ENCODE measurements at regions of chr5 and their contacts with region 1.

Region 1: DNA sequence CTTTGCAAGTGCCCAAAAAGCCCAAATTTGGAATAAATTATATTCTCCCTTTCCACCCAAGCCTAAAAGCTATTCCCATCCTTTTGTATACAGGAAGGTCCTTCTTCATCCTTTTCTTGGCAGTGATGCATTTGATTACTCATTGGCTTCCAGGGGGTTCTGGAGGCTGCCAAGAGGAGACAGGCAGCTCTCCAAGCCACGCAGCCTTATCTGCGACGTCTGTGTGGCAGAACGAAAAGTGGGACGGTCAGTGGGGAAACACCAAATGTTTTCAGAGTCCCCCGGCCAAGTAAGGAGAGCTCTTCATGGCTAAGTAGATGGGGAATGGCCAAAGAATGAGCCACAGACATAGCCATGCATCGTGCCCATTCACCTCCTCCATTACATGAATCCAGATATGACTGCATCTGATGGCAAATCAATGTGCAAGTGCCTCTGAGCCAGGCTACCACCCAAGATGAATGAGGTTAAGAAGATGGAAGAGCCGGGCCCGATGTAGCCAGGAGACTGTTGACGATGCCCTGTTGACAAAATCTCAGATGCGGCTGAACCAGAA is 12.1 kb downstream of the ADAM19 start:
- DNase-seq: peak; percentile 79
- H3K4me3 Mint-ChIP-seq: no peak overlapping the region
- H3K27ac Mint-ChIP-seq: no peak overlapping the region
- H3K4me1 Mint-ChIP-seq: peaks cover 13% of the 10 kb centered on the region
- H3K27me3 Mint-ChIP-seq: no peaks in the 10 kb centered on the region
- CTCF ChIP-seq: no peak

Region 2: GRCh38 chr5:157611571-157612476 is 48.4 kb after region 1 on chr5:
- CTCF ChIA-PET with region 1: no interaction called
- POLR2A ChIA-PET with region 1: interaction called, 3 read pairs
- intact Hi-C with region 1: loop called (anchors 5 kb)
- DNase-seq: peak; percentile 90
- H3K4me3 Mint-ChIP-seq: no peak overlapping the region
- H3K27ac Mint-ChIP-seq: peak overlapping the region; percentile 47
- H3K4me1 Mint-ChIP-seq: peaks cover 21% of the 10 kb centered on the region
- H3K27me3 Mint-ChIP-seq: no peaks in the 10 kb centered on the region
- CTCF ChIP-seq: no peak

Region 3: GRCh38 chr5:157681048-157681447 is 117.6 kb after region 1 on chr5:
- CTCF ChIA-PET with region 1: no interaction called
- POLR2A ChIA-PET with region 1: no interaction called
- intact Hi-C with region 1: no loop called
- DNase-seq: no peak
- H3K4me3 Mint-ChIP-seq: no peak overlapping the region
- H3K27ac Mint-ChIP-seq: no peak overlapping the region
- H3K4me1 Mint-ChIP-seq: no peaks in the 10 kb centered on the region
- H3K27me3 Mint-ChIP-seq: no peaks in the 10 kb centered on the region
- CTCF ChIP-seq: no peak

Region 4: DNA sequence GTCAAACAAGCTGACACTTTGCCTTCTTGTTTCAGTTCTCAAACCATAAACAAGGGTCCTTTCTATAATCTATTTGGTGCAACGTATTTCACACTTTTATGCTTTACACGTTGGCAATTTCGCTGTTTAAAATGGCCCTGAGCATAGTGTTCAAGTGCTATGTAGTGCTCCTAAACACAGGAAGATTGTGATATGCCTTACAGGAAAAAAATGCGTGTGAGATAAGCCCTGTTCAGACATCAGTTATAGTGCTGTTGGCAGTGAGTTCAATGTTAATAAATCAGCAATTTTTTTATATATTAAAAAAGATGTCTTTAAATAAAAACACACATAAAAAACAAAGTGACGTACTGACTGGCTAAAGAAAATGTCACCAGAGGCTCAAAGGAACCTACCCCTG is 271.6 kb after region 1 on chr5:
- CTCF ChIA-PET with region 1: no interaction called
- POLR2A ChIA-PET with region 1: no interaction called
- intact Hi-C with region 1: no loop called
- DNase-seq: no peak
- H3K4me3 Mint-ChIP-seq: no peak overlapping the region
- H3K27ac Mint-ChIP-seq: no peak overlapping the region
- H3K4me1 Mint-ChIP-seq: peaks cover 6% of the 10 kb centered on the region
- H3K27me3 Mint-ChIP-seq: no peaks in the 10 kb centered on the region
- CTCF ChIP-seq: no peak

Measured in MCF 10A (cell line).